K562 (cell line): ENCODE measurements at regions of chr3 and their contacts with region 1.

Region 1: GRCh38 chr3:101518421-101518871 is 5.4 kb upstream of the SENP7 start:
- DNase-seq: peak in 1 of 4 experiments; percentile 47
- ATAC-seq: peak; percentile 72
- H3K4me3 ChIP-seq: no peak overlapping the region
- H3K27ac ChIP-seq: peak overlapping the region; percentile 75
- H3K4me1 ChIP-seq: peaks cover 3 to 24% of the 10 kb centered on the region in 2 experiments; a peak in 3 of 5 replicates
- H3K27me3 ChIP-seq: no peaks in the 10 kb centered on the region
- CTCF ChIP-seq: no peak
- EP300 ChIP-seq: no peak
- POLR2A ChIP-seq: no peak
- RAD21 ChIP-seq: no peak

Region 2: DNA sequence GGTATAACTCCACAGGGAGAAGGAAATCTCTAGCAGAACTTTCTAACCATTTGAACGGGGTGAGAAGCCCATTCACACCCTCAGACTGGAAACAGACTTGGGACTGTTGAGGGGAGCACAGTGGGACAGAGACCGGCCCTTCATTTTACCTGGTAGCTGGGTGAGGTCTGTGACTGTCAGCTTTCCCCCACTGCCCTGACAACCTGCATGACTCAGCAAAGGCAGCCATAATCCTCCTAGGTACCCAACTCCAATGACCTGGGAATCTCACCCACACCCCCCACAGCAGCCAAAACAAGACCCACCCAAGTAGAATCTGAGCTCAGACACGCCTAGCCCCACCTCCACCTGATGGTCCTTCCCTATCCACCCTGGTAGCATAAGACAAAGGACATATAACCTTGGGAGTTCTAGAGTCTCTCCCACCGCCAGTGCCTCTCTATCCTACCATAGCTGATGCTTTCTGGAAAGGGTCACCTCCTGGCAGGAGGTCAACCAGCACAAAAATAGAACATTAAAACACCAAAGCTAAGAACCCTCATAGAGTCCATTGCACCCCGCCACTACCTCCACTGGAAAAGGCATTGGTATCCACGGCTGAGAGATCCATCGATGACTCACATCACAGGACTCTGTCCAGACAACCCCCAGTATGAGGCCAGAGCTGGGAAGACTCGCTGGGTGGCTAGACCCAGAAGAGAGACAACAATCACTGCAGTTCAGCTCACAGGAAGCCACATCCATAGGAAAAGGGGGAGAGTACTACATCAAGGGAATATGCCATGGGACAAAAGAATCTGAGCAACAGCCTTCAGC is 33.4 kb before region 1 on chr3:
- CTCF ChIA-PET with region 1: no interaction called
- POLR2A ChIA-PET with region 1: no interaction called
- in situ Hi-C with region 1: no loop called
- intact Hi-C with region 1: no loop called
- DNase-seq: peak in 3 of 4 experiments; percentile 16 to 54 (median 29)
- ATAC-seq: peak; percentile 86
- H3K4me3 ChIP-seq: no peak overlapping the region
- H3K27ac ChIP-seq: peak overlapping the region; percentile 44; the same call in 1 of the 3 replicates
- H3K4me1 ChIP-seq: peaks cover 5 to 11% of the 10 kb centered on the region in 2 experiments; a peak in 3 of 5 replicates
- H3K27me3 ChIP-seq: no peaks in the 10 kb centered on the region
- CTCF ChIP-seq: no peak
- EP300 ChIP-seq: no peak
- POLR2A ChIP-seq: no peak
- RAD21 ChIP-seq: no peak

Region 3: GRCh38 chr3:101561630-101562328 is 43.3 kb after region 1 on chr3 and contains the start of gene TRMT10C:
- CTCF ChIA-PET with region 1: no interaction called
- POLR2A ChIA-PET with region 1: interaction called, 3 read pairs
- in situ Hi-C with region 1: loop called (anchors 5 kb)
- intact Hi-C with region 1: no loop called
- DNase-seq: peak; percentile 75 to 93 (median 80)
- ATAC-seq: peak; percentile 95
- H3K4me3 ChIP-seq: peak within 1 kb of the TSS; percentile 94
- H3K27ac ChIP-seq: peak within 1 kb of the TSS; percentile 96
- H3K4me1 ChIP-seq: peaks cover under 1 to 8% of the 10 kb centered on the region in 2 experiments; a peak in 3 of 5 replicates
- H3K27me3 ChIP-seq: no peaks in the 10 kb centered on the region
- CTCF ChIP-seq: no peak
- EP300 ChIP-seq: 0 out of 2 replicates have a peak, but pooled peaks have one; percentile 29
- POLR2A ChIP-seq: peak; percentile 91
- RAD21 ChIP-seq: 0 out of 4 replicates have a peak, but pooled peaks of 1 of the 2 experiments have one; percentile 3
- polyA plus RNA-seq, gene TRMT10C: 101 to 106 TPM